ENCODE measurements at regions of chr19 and their contacts with region 1.

Region 1: GRCh38 chr19:47348819-47349795 is at the start of gene DHX34:
- H3K4me3 ChIP-seq: peak within 1 kb of the TSS; percentile 53
- H3K27ac ChIP-seq: peak within 1 kb of the TSS; percentile 59; the same call in 1 of the 2 replicates
- H3K4me1 ChIP-seq: peaks cover 11% of the 10 kb centered on the region
- CTCF ChIP-seq: peak; percentile 97

Region 2: GRCh38 chr19:47210689-47211316 is 138.3 kb before region 1 on chr19:
- CTCF ChIA-PET with region 1: no interaction called
- POLR2A ChIA-PET with region 1: no interaction called
- H3K4me3 ChIP-seq: no peak overlapping the region
- H3K27ac ChIP-seq: no peak overlapping the region
- H3K4me1 ChIP-seq: peaks cover 3% of the 10 kb centered on the region; the same call in 1 of the 2 replicates
- CTCF ChIP-seq: peak; percentile 52; the same call in 1 of the 2 replicates

Region 3: GRCh38 chr19:47284324-47284899 is 64.7 kb before region 1 on chr19:
- CTCF ChIA-PET with region 1: interaction called, 10 read pairs
- POLR2A ChIA-PET with region 1: interaction called, 3 read pairs
- H3K4me3 ChIP-seq: no peak overlapping the region
- H3K27ac ChIP-seq: no peak overlapping the region
- H3K4me1 ChIP-seq: peaks cover 6% of the 10 kb centered on the region; the same call in 1 of the 2 replicates
- CTCF ChIP-seq: peak; percentile 66

Region 4: GRCh38 chr19:47305309-47305751 is 43.8 kb before region 1 on chr19:
- CTCF ChIA-PET with region 1: interaction called, 12 read pairs
- POLR2A ChIA-PET with region 1: no interaction called
- H3K4me3 ChIP-seq: no peak overlapping the region; the same call in 1 of the 2 replicates
- H3K27ac ChIP-seq: no peak overlapping the region
- H3K4me1 ChIP-seq: no peaks in the 10 kb centered on the region
- CTCF ChIP-seq: peak; percentile 75

Region 5: DNA sequence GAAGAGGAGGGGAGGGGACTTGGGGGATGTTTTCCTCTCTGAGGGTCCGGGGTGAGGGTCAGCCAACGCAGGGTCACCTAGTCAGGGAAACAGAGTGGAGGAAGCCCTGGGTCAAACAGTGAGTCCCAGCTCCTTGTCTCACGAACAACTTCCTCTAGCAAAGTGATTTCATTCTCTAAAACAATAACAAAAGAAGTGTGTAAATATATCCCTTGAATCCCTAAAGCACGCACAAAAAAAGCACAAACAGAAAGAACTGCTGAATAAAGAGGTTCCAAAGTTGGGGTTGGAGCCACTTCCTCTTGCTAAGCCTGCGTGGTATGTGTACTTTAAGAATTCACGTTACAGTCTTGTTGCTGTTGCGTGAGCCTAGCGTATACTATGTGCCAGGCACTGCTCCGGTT is 18.6 kb before region 1 on chr19:
- CTCF ChIA-PET with region 1: interaction called, 36 read pairs
- POLR2A ChIA-PET with region 1: interaction called, 3 read pairs
- H3K4me3 ChIP-seq: no peak overlapping the region
- H3K27ac ChIP-seq: no peak overlapping the region
- H3K4me1 ChIP-seq: no peaks in the 10 kb centered on the region
- CTCF ChIP-seq: no peak

Region 6: GRCh38 chr19:47370045-47370611 is 21.0 kb after region 1 on chr19:
- CTCF ChIA-PET with region 1: interaction called, 22 read pairs
- POLR2A ChIA-PET with region 1: interaction called, 6 read pairs
- H3K4me3 ChIP-seq: no peak overlapping the region
- H3K27ac ChIP-seq: 0 out of 2 replicates have a peak overlapping the region, but pooled peaks have one; percentile 5
- H3K4me1 ChIP-seq: no peaks in the 10 kb centered on the region
- CTCF ChIP-seq: no peak

Region 7: GRCh38 chr19:47381653-47382279 is 32.7 kb after region 1 on chr19:
- CTCF ChIA-PET with region 1: interaction called, 5 read pairs
- POLR2A ChIA-PET with region 1: interaction called, 10 read pairs
- H3K4me3 ChIP-seq: no peak overlapping the region
- H3K27ac ChIP-seq: no peak overlapping the region
- H3K4me1 ChIP-seq: no peaks in the 10 kb centered on the region; the same call in 1 of the 2 replicates
- CTCF ChIP-seq: no peak

Region 8: DNA sequence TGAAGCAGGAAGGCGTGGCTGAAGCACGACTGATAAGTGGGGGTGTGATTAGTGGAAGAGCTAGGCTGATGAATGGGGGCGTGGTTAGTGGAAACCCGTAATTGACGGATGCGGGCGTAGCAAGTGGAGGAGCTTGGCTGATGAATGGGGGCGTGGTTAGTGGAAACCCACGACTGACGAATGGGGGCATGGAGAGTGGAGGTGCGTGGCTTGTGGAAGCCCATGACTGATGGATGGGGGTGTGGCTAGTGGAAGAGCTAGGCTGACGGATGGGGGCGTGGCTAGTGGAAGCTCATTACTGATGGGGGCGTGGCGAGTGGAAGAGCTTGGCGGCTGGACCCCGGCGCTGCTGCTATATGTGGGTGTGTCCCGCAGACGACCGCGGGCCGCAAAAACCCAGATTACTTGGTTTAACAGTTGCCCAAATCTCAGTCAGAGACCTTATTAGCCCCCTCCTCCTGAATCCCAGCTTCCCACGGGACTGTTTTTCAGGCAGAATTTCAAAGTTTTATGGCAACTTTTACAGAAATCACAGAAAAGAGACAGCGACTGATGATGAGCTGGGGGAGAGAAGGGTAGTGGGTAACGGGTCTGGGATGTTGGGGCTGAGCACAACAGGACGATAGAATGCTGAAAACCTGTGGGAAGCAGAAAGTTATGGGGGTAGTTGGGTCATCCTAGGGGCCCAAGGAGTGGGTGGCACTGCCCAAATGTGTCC is 79.2 kb after region 1 on chr19:
- CTCF ChIA-PET with region 1: interaction called, 28 read pairs
- POLR2A ChIA-PET with region 1: interaction called, 20 read pairs
- H3K4me3 ChIP-seq: peak overlapping the region; percentile 4; the same call in 1 of the 2 replicates
- H3K27ac ChIP-seq: no peak overlapping the region
- H3K4me1 ChIP-seq: peaks cover 10% of the 10 kb centered on the region
- CTCF ChIP-seq: no peak

Measured in HEK293 (cell line).